ENCODE measurements at regions of chr1 and their contacts with region 1.

Region 1: GRCh38 chr1:1164701-1165451 is 8.8 kb upstream of the TTLL10 start:
- DNase-seq: peak; percentile 61 to 64
- H3K4me3 ChIP-seq: peak overlapping the region; percentile 82
- H3K4me3 Mint-ChIP-seq: peak overlapping the region; percentile 90
- H3K27ac Mint-ChIP-seq: peak overlapping the region; percentile 81
- H3K4me1 ChIP-seq: peaks cover 17% of the 10 kb centered on the region
- H3K4me1 Mint-ChIP-seq: no peaks in the 10 kb centered on the region
- H3K27me3 ChIP-seq: no peaks in the 10 kb centered on the region
- H3K27me3 Mint-ChIP-seq: no peaks in the 10 kb centered on the region
- CTCF ChIP-seq: no peak

Region 2: DNA sequence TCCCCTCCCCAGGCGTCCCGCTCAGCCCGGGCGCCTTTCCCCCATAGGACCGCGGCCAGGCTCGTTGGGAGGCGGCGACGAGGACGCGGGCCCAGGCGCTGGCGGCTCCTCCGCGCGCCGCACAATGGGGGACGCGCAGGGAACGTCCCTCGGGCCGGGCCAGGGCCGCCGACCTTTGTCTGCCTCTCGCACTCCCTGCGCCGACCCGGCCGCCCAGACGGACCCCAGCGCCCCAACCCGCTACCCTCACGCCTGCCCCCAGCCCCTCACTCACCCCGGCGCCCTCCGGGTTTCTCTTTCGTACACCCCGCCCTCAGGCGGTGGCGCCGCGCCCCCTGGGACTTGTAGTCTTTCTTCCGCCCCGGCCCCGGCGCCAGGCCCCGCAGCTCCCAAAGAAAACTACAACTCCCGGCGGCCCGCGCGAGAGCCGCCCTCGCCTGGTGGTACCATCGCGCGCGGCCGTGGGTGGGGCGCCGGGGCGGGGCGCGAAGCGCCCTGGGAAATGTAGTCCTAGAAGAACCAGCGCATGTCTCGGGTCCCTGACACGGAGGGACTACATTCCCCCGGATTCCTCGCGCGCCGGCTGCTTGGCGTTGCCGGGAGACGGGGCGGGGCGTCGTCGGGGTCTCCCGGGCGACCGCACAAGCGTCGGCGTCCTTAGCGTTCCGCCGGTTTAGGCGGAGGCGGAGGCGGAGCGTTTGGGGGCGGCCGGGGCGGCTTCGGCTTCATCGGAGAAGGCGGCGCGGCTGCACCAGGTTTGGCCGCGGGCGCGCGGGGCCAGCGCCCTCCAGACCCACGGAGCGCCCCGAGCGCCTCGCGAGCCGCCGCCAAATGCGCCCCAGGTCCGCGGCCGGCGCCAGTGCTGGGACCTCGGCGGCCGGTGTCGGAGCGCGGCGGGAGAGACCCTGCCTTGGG is 48.8 kb before region 1 on chr1 and contains the start of gene C1orf159:
- CTCF ChIA-PET with region 1: no interaction called
- POLR2A ChIA-PET with region 1: interaction called, 9 read pairs
- intact Hi-C with region 1: loop called (anchors 2 kb)
- DNase-seq: peak; percentile 97
- H3K4me3 ChIP-seq: peak within 1 kb of the TSS; percentile 82
- H3K4me3 Mint-ChIP-seq: peak within 1 kb of the TSS; percentile 81
- H3K27ac Mint-ChIP-seq: peak within 1 kb of the TSS; percentile 59
- H3K4me1 ChIP-seq: no peaks in the 10 kb centered on the region
- H3K4me1 Mint-ChIP-seq: no peaks in the 10 kb centered on the region
- H3K27me3 ChIP-seq: no peaks in the 10 kb centered on the region
- H3K27me3 Mint-ChIP-seq: no peaks in the 10 kb centered on the region
- CTCF ChIP-seq: no peak
- total RNA-seq, gene C1orf159: 12.9 and 14.0 TPM in 2 replicates

Region 3: GRCh38 chr1:1122078-1122811 is 42.6 kb before region 1 on chr1:
- CTCF ChIA-PET with region 1: interaction called, 6 read pairs
- POLR2A ChIA-PET with region 1: interaction called, 15 read pairs
- intact Hi-C with region 1: loop called (anchors 2 kb)
- DNase-seq: peak in 1 of 2 experiments; percentile 73
- H3K4me3 ChIP-seq: no peak overlapping the region
- H3K4me3 Mint-ChIP-seq: no peak overlapping the region
- H3K27ac Mint-ChIP-seq: no peak overlapping the region
- H3K4me1 ChIP-seq: peaks cover 41% of the 10 kb centered on the region
- H3K4me1 Mint-ChIP-seq: peaks cover 16% of the 10 kb centered on the region
- H3K27me3 ChIP-seq: no peaks in the 10 kb centered on the region
- H3K27me3 Mint-ChIP-seq: no peaks in the 10 kb centered on the region
- CTCF ChIP-seq: peak; percentile 59 to 70

Region 4: DNA sequence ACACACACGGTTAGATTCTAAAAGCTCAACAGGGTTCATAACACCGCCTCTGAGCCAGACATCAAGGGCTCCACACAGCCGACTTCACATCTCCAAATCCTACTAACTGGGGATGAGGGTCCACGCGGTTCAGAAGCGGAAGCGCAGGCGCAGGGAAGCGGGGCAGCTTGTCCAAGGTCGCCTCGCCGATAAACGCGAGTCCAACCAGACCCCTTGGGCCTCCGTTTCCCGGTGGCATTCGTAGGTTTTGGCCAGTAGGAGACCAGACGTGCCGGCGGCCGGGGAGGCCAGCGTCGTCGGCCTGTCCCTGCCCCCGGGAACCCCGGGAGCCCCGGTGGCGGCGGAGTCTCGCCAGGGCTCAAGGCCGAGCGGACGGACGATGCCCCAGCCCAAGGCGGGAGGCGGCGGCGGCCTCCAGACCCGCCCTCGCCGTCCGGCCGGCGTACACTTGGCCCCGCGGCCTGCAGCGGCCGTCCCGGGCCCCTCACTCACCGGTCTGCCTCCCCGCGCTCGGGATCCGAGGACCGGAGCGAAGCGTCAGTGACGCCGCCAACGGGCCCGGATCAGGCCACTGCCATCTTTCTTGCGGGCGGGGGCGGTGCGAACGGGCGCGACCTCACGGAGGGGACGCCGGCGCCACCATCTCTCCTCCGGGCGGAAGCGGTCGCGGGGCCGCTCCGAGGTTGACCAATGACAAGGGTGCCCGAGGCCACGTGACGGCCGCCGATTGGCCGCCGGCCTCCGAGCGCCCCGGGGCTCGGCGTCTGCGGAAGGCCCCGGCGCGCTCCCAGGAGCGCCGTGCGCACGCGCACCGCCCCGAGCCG is 66.7 kb after region 1 on chr1 and contains the start of gene SDF4:
- CTCF ChIA-PET with region 1: interaction called, 3 read pairs
- POLR2A ChIA-PET with region 1: interaction called, 7 read pairs
- intact Hi-C with region 1: loop called (anchors 2 kb)
- DNase-seq: peak; percentile 93 to 94
- H3K4me3 ChIP-seq: peak within 1 kb of the TSS; percentile 70
- H3K4me3 Mint-ChIP-seq: peak within 1 kb of the TSS; percentile 85
- H3K27ac Mint-ChIP-seq: peak within 1 kb of the TSS; percentile 83
- H3K4me1 ChIP-seq: peaks cover 9% of the 10 kb centered on the region
- H3K4me1 Mint-ChIP-seq: peaks cover 6% of the 10 kb centered on the region
- H3K27me3 ChIP-seq: no peaks in the 10 kb centered on the region
- H3K27me3 Mint-ChIP-seq: no peaks in the 10 kb centered on the region
- CTCF ChIP-seq: no peak
- total RNA-seq, gene SDF4: 138 and 140 TPM in 2 replicates

Region 5: DNA sequence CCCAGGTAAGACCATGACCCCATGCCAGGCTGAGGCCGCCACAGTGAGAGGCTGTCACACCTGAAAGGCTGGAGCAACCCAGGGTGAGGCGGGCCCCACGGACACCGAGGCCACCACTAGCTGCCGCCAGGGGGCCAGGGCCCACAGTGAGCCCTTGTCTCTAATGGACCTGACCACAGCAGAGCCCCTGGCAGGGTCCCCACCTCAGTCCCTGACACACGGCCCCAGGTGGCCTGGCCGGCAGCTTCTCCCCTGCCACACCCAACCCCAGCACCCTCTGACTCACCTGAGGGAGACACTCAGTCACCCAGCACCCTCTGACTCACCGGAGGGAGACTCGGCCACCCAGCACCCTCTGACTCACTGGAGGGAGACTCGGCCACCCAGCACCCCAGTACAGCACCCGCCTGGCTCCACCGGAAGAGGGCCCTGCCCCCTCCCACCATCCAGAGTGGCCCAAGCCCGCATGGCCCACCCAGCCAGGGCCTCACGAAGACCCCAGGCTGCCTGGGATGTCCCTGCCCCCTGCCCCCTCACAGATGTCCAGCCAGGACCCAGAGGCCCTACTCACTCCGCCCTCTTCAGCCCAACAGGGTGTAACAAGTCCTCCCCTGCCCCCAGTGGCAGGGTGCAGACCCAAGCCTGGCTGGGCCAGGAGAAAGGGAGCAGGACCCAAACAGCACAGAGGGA is 179.9 kb after region 1 on chr1:
- CTCF ChIA-PET with region 1: no interaction called
- POLR2A ChIA-PET with region 1: no interaction called
- intact Hi-C with region 1: no loop called
- DNase-seq: no peak
- H3K4me3 ChIP-seq: no peak overlapping the region
- H3K4me3 Mint-ChIP-seq: no peak overlapping the region
- H3K27ac Mint-ChIP-seq: no peak overlapping the region
- H3K4me1 ChIP-seq: peaks cover 14% of the 10 kb centered on the region
- H3K4me1 Mint-ChIP-seq: no peaks in the 10 kb centered on the region
- H3K27me3 ChIP-seq: no peaks in the 10 kb centered on the region
- H3K27me3 Mint-ChIP-seq: no peaks in the 10 kb centered on the region
- CTCF ChIP-seq: peak in 1 of 2 experiments; percentile 29

Region 6: GRCh38 chr1:1574721-1575537 is 410.1 kb after region 1 on chr1 and contains the start of gene SSU72:
- CTCF ChIA-PET with region 1: no interaction called
- POLR2A ChIA-PET with region 1: no interaction called
- intact Hi-C with region 1: no loop called
- DNase-seq: peak; percentile 90 to 91
- H3K4me3 ChIP-seq: peak within 1 kb of the TSS; percentile 95
- H3K4me3 Mint-ChIP-seq: peak within 1 kb of the TSS; percentile 95
- H3K27ac Mint-ChIP-seq: peak within 1 kb of the TSS; percentile 99
- H3K4me1 ChIP-seq: no peaks in the 10 kb centered on the region
- H3K4me1 Mint-ChIP-seq: peaks cover 6% of the 10 kb centered on the region
- H3K27me3 ChIP-seq: no peaks in the 10 kb centered on the region
- H3K27me3 Mint-ChIP-seq: no peaks in the 10 kb centered on the region
- CTCF ChIP-seq: no peak
- total RNA-seq, gene SSU72: 91.5 and 96.2 TPM in 2 replicates

Measured in Caco-2 (cell line).